CD4-positive, alpha-beta memory T cell (primary cell): ENCODE measurements at regions of chr6 and their contacts with region 1.

Region 1: GRCh38 chr6:97059473-97059872 is 134.9 kb downstream of the KLHL32 start:
- DNase-seq: peak in 4 of 5 donors; percentile 22 to 34 (median 28)
- H3K4me3 ChIP-seq: no peak overlapping the region
- H3K4me3 Mint-ChIP-seq: no peak overlapping the region
- H3K27ac ChIP-seq: no peak overlapping the region
- H3K27ac Mint-ChIP-seq: no peak overlapping the region
- H3K4me1 ChIP-seq: no peaks in the 10 kb centered on the region
- H3K4me1 Mint-ChIP-seq: no peaks in the 10 kb centered on the region
- H3K27me3 ChIP-seq: no peaks in the 10 kb centered on the region
- H3K27me3 Mint-ChIP-seq: no peaks in the 10 kb centered on the region

Region 2: GRCh38 chr6:95431637-95432228 is 1627.7 kb before region 1 on chr6:
- CTCF ChIA-PET with region 1: no interaction called
- POLR2A ChIA-PET with region 1: no interaction called
- intact Hi-C with region 1: loop called (anchors 2 kb)
- DNase-seq: peak; percentile 18 to 39 (median 28)
- H3K4me3 ChIP-seq: no peak overlapping the region
- H3K4me3 Mint-ChIP-seq: no peak overlapping the region
- H3K27ac ChIP-seq: no peak overlapping the region
- H3K27ac Mint-ChIP-seq: no peak overlapping the region
- H3K4me1 ChIP-seq: no peaks in the 10 kb centered on the region
- H3K4me1 Mint-ChIP-seq: no peaks in the 10 kb centered on the region
- H3K27me3 ChIP-seq: no peaks in the 10 kb centered on the region
- H3K27me3 Mint-ChIP-seq: peaks cover 0 to 4% of the 10 kb centered on the region in 2 donors

Region 3: GRCh38 chr6:96391776-96392360 is 667.6 kb before region 1 on chr6:
- CTCF ChIA-PET with region 1: no interaction called
- POLR2A ChIA-PET with region 1: no interaction called
- intact Hi-C with region 1: loop called (anchors 2 kb)
- DNase-seq: peak in 1 of 5 donors; percentile 2
- H3K4me3 ChIP-seq: no peak overlapping the region
- H3K4me3 Mint-ChIP-seq: no peak overlapping the region
- H3K27ac ChIP-seq: no peak overlapping the region
- H3K27ac Mint-ChIP-seq: no peak overlapping the region
- H3K4me1 ChIP-seq: no peaks in the 10 kb centered on the region
- H3K4me1 Mint-ChIP-seq: peaks cover 0 to 5% (median 2%) of the 10 kb centered on the region in 4 donors
- H3K27me3 ChIP-seq: no peaks in the 10 kb centered on the region
- H3K27me3 Mint-ChIP-seq: peaks cover 3 to 5% of the 10 kb centered on the region in 2 donors

Region 4: GRCh38 chr6:96542702-96543101 is 516.8 kb before region 1 on chr6:
- CTCF ChIA-PET with region 1: no interaction called
- POLR2A ChIA-PET with region 1: no interaction called
- intact Hi-C with region 1: loop called (anchors 2 kb)
- DNase-seq: peak in 3 of 5 donors; percentile 7 to 16 (median 10)
- H3K4me3 ChIP-seq: no peak overlapping the region
- H3K4me3 Mint-ChIP-seq: no peak overlapping the region
- H3K27ac ChIP-seq: no peak overlapping the region
- H3K27ac Mint-ChIP-seq: peak overlapping the region in 1 of 7 donors; percentile 45
- H3K4me1 ChIP-seq: no peaks in the 10 kb centered on the region
- H3K4me1 Mint-ChIP-seq: peaks cover 0 to 2% (median 0%) of the 10 kb centered on the region in 4 donors
- H3K27me3 ChIP-seq: no peaks in the 10 kb centered on the region
- H3K27me3 Mint-ChIP-seq: no peaks in the 10 kb centered on the region

Region 5: GRCh38 chr6:96626759-96627364 is 432.6 kb before region 1 on chr6:
- CTCF ChIA-PET with region 1: interaction called, 43 read pairs
- POLR2A ChIA-PET with region 1: no interaction called
- intact Hi-C with region 1: loop called (anchors 1 kb)
- DNase-seq: peak in 4 of 5 donors; percentile 7 to 24 (median 17)
- H3K4me3 ChIP-seq: no peak overlapping the region
- H3K4me3 Mint-ChIP-seq: no peak overlapping the region
- H3K27ac ChIP-seq: no peak overlapping the region
- H3K27ac Mint-ChIP-seq: no peak overlapping the region
- H3K4me1 ChIP-seq: no peaks in the 10 kb centered on the region
- H3K4me1 Mint-ChIP-seq: no peaks in the 10 kb centered on the region
- H3K27me3 ChIP-seq: no peaks in the 10 kb centered on the region
- H3K27me3 Mint-ChIP-seq: peaks cover 3 to 6% of the 10 kb centered on the region in 2 donors

Region 6: GRCh38 chr6:97023982-97024381 is 35.5 kb before region 1 on chr6:
- CTCF ChIA-PET with region 1: no interaction called
- POLR2A ChIA-PET with region 1: no interaction called
- intact Hi-C with region 1: no loop called
- DNase-seq: no peak
- H3K4me3 ChIP-seq: no peak overlapping the region
- H3K4me3 Mint-ChIP-seq: no peak overlapping the region
- H3K27ac ChIP-seq: no peak overlapping the region
- H3K27ac Mint-ChIP-seq: no peak overlapping the region
- H3K4me1 ChIP-seq: no peaks in the 10 kb centered on the region
- H3K4me1 Mint-ChIP-seq: no peaks in the 10 kb centered on the region
- H3K27me3 ChIP-seq: no peaks in the 10 kb centered on the region
- H3K27me3 Mint-ChIP-seq: no peaks in the 10 kb centered on the region